ENCODE measurements at regions of chr2 and their contacts with region 1.

Region 1: DNA sequence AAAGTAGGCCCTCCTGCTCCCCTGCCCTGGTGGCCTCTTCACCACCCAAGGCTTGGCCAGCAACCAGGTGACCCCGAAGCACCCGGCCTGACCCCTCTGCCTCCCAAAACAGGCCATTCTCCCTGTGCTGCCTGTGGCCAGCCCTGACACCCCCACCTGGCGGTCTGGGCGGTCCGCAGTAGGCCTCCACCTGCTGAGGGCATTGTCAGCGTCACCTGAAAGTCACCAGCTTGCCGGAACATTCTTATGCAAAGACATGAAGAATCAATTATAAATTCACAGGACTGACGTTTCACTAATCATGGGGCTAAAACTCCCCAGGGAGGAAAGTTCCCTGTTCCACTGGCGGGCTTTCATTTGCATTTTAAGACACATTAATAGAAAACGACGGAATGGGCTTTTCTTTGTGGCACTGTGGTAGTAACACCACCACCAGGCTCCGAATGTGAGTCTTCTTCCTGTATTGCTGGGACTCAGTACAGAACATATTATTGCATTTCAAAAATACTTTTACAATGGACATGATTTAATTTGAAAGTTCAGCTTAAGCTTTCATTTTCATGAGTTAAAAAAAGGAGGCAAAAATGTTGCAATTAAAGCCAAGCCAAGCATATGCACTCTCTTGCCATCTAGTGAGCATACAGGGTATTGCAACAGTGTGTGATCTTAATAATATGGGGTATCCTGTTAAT is 57.4 kb downstream of the ADI1 start:
- DNase-seq: peak; percentile 69
- ATAC-seq: no peak
- H3K4me3 ChIP-seq: no peak overlapping the region
- H3K27ac ChIP-seq: no peak overlapping the region
- H3K4me1 ChIP-seq: peaks cover 39% of the 10 kb centered on the region
- H3K27me3 ChIP-seq: no peaks in the 10 kb centered on the region
- CTCF ChIP-seq: peak; percentile 71
- EP300 ChIP-seq: no peak
- POLR2A ChIP-seq: no peak
- RAD21 ChIP-seq: 0 out of 2 replicates have a peak, but pooled peaks have one; percentile 54

Region 2: GRCh38 chr2:3313781-3314375 is 148.1 kb before region 1 on chr2:
- CTCF ChIA-PET with region 1: no interaction called
- POLR2A ChIA-PET with region 1: no interaction called
- in situ Hi-C with region 1: no loop called
- intact Hi-C with region 1: no loop called
- DNase-seq: no peak
- ATAC-seq: no peak
- H3K4me3 ChIP-seq: no peak overlapping the region
- H3K27ac ChIP-seq: no peak overlapping the region
- H3K4me1 ChIP-seq: no peaks in the 10 kb centered on the region
- H3K27me3 ChIP-seq: no peaks in the 10 kb centered on the region
- CTCF ChIP-seq: no peak
- EP300 ChIP-seq: no peak
- POLR2A ChIP-seq: no peak
- RAD21 ChIP-seq: no peak

Region 3: GRCh38 chr2:3361518-3362389 is 100.2 kb before region 1 on chr2:
- CTCF ChIA-PET with region 1: no interaction called
- POLR2A ChIA-PET with region 1: no interaction called
- in situ Hi-C with region 1: no loop called
- intact Hi-C with region 1: no loop called
- DNase-seq: no peak
- ATAC-seq: no peak; the same call in 2 of the 3 replicates
- H3K4me3 ChIP-seq: no peak overlapping the region
- H3K27ac ChIP-seq: no peak overlapping the region
- H3K4me1 ChIP-seq: peaks cover 17% of the 10 kb centered on the region
- H3K27me3 ChIP-seq: no peaks in the 10 kb centered on the region
- CTCF ChIP-seq: no peak
- EP300 ChIP-seq: no peak
- POLR2A ChIP-seq: no peak
- RAD21 ChIP-seq: no peak

Region 4: DNA sequence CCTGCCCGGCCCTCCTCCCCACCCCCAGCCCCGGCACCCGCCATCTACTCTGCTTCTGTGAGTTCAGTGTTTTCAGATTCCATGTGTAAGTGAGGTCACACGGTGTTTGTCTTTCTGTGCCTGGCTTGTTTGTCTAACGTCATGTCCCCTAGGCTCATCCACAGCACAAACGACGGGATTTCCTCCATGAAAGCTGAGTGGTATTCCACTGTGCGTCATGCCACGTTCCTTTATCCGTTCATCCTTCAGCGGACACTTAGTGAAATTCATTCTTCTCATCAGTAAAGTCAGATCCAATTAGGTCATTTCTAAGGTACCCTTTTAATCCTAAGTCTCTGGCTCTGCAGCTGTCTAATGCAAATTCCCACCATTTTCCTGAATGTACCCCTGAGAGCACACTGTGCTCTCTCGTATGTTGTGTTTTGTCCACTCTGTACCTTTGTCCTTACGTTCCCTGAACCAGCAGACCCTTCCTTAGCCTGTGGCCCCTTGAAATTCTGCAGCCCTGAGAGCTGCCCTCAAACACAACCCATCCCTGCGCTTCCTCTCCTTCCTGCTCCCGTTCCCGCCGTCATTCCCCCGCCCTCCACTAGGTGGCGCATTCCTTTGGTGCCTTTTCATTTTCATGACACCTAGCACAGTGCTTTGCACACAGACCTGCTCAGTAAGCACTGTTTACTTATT is 38.3 kb before region 1 on chr2:
- CTCF ChIA-PET with region 1: interaction called, 9 read pairs
- POLR2A ChIA-PET with region 1: interaction called, 4 read pairs
- in situ Hi-C with region 1: no loop called
- intact Hi-C with region 1: loop called (anchors 1 kb)
- DNase-seq: peak; percentile 83
- ATAC-seq: peak; percentile 87
- H3K4me3 ChIP-seq: no peak overlapping the region
- H3K27ac ChIP-seq: peak overlapping the region; percentile 32
- H3K4me1 ChIP-seq: peaks cover 16% of the 10 kb centered on the region
- H3K27me3 ChIP-seq: no peaks in the 10 kb centered on the region
- CTCF ChIP-seq: peak; percentile 98
- EP300 ChIP-seq: no peak
- POLR2A ChIP-seq: no peak
- RAD21 ChIP-seq: peak; percentile 73

Region 5: GRCh38 chr2:3443506-3444073 is 18.4 kb before region 1 on chr2:
- CTCF ChIA-PET with region 1: no interaction called
- POLR2A ChIA-PET with region 1: no interaction called
- in situ Hi-C with region 1: no loop called
- intact Hi-C with region 1: no loop called
- DNase-seq: no peak
- ATAC-seq: peak; percentile 70
- H3K4me3 ChIP-seq: no peak overlapping the region
- H3K27ac ChIP-seq: no peak overlapping the region
- H3K4me1 ChIP-seq: peaks cover 18% of the 10 kb centered on the region
- H3K27me3 ChIP-seq: no peaks in the 10 kb centered on the region
- CTCF ChIP-seq: peak; percentile 61
- EP300 ChIP-seq: no peak
- POLR2A ChIP-seq: no peak
- RAD21 ChIP-seq: no peak

Region 6: DNA sequence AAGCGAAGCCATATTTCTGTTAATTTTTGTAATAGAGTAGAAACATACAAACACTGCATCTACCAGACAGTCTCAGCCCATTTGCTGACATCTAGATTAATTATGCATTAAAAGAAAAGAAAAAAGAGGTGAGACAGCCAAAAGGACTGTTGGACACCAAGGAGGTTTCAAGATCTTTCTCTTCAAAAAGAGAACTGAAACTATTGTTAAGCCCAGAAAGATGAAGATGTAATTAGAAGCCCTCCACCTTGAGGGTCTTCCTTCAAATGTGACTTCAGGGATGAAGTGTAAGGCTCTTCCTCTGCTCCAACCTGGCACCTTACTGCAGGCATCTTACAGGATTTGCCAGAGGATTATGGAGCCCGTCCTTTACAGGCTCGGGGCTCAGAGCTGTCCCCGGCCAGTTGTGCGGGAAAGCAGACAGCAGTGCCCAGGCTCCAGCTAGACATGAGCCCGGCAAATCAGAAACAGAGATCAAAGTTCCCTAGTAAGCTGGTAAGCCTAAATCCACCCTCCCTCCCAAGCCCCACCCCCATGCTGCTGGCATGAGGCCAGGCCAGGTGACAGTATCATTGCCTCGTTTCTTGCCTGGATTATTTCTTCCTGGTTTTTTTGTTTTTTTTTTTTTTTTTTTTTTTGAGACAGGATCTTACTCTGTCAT is 18.5 kb after region 1 on chr2:
- CTCF ChIA-PET with region 1: no interaction called
- POLR2A ChIA-PET with region 1: interaction called, 35 read pairs
- in situ Hi-C with region 1: no loop called
- intact Hi-C with region 1: no loop called
- DNase-seq: peak; percentile 84
- ATAC-seq: peak; percentile 85
- H3K4me3 ChIP-seq: peak overlapping the region in 1 of 3 experiments; percentile 18; a peak in 1 of 6 replicates
- H3K27ac ChIP-seq: peak overlapping the region; percentile 36
- H3K4me1 ChIP-seq: peaks cover 32% of the 10 kb centered on the region
- H3K27me3 ChIP-seq: no peaks in the 10 kb centered on the region
- CTCF ChIP-seq: no peak
- EP300 ChIP-seq: no peak
- POLR2A ChIP-seq: peak in 1 of 2 experiments; percentile 29; a peak in 1 of 4 replicates
- RAD21 ChIP-seq: no peak

Region 7: GRCh38 chr2:3518496-3519254 is 56.7 kb after region 1 on chr2:
- CTCF ChIA-PET with region 1: no interaction called
- POLR2A ChIA-PET with region 1: interaction called, 21 read pairs
- in situ Hi-C with region 1: no loop called
- intact Hi-C with region 1: loop called (anchors 1 kb)
- DNase-seq: peak; percentile 97
- ATAC-seq: peak; percentile 70
- H3K4me3 ChIP-seq: peak overlapping the region; percentile 67 to 88 (median 81)
- H3K27ac ChIP-seq: peak overlapping the region; percentile 96
- H3K4me1 ChIP-seq: peaks cover 74% of the 10 kb centered on the region
- H3K27me3 ChIP-seq: no peaks in the 10 kb centered on the region
- CTCF ChIP-seq: peak; percentile 17; the same call in 1 of the 2 replicates
- EP300 ChIP-seq: no peak
- POLR2A ChIP-seq: peak in 1 of 2 experiments; percentile 91; a peak in 2 of 4 replicates
- RAD21 ChIP-seq: peak; percentile 40

Region 8: DNA sequence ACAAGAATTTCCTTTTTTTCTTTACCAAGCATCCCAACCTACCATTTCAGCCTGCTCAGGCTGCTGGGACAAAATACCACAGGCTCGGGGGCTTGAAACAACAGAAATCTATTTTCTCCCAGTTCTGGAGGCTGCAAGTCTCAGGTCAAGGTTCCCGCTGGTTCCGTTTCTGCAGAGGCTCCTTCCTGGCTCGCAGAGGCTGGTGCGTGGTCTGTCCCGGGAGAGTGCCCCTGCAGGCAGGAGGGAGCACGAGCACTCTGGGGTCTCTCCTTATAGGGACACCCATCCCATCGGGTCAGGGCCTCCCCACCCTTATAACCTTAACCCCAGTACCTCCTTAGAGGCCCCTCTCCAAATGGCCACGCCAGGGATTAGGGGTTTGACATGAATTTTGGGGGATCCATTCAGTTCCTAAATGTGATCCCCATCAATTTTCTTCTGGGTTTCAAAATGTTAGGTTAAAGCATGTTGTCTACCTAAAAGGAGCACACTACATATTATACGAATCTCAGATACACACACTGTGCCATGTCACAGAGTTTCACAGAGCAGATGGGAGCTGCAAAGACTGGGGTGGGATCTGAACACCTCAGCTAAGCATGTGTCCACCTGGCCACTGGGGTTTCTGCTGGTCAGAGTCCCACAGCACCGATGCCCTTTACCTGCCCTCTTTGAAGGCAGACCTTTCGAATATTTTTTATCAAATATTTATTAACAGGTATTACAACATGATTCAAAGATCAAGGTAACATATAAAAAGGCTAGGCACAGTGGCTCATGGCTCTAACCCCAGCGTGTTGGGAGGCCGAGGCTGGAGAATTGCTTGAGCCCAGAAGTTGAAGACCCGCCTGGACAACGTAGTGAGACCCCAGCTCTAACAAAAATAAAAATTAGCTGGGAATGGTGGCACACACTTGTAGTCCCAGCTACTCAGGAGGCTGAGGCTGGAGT is 75.0 kb after region 1 on chr2:
- CTCF ChIA-PET with region 1: no interaction called
- POLR2A ChIA-PET with region 1: interaction called, 16 read pairs
- in situ Hi-C with region 1: no loop called
- intact Hi-C with region 1: no loop called
- DNase-seq: peak; percentile 82
- ATAC-seq: peak; percentile 89
- H3K4me3 ChIP-seq: peak overlapping the region; percentile 59 to 79 (median 73)
- H3K27ac ChIP-seq: peak overlapping the region; percentile 92
- H3K4me1 ChIP-seq: peaks cover 41% of the 10 kb centered on the region
- H3K27me3 ChIP-seq: no peaks in the 10 kb centered on the region; a peak in 1 of 5 replicates
- CTCF ChIP-seq: peak; percentile 82
- EP300 ChIP-seq: no peak
- POLR2A ChIP-seq: no peak; a peak in 1 of 4 replicates
- RAD21 ChIP-seq: peak; percentile 71

Measured in HepG2 (cell line).